GM12878 (cell line): ENCODE measurements at regions of chr1 and their contacts with region 1.

Region 1: GRCh38 chr1:56578963-56579875 is at the start of gene PLPP3:
- DNase-seq: no peak
- ATAC-seq: peak; percentile 59
- H3K4me3 ChIP-seq: peak within 1 kb of the TSS; percentile 72
- H3K27ac ChIP-seq: no peak within 1 kb of the TSS
- H3K4me1 ChIP-seq: no peaks in the 10 kb centered on the region
- H3K27me3 ChIP-seq: peaks cover 0 to 11% of the 10 kb centered on the region in 2 experiments; a peak in 2 of 4 replicates
- CTCF ChIP-seq: peak in 2 of 3 experiments; percentile 27 to 32; a peak in 4 of 6 replicates
- EP300 ChIP-seq: no peak
- POLR2A ChIP-seq: no peak
- RAD21 ChIP-seq: peak; percentile 53
- polyA plus RNA-seq, gene PLPP3: 7.4 to 8.0 TPM

Region 2: GRCh38 chr1:55860798-55861519 is 718.3 kb before region 1 on chr1:
- CTCF ChIA-PET with region 1: interaction called, 67 read pairs
- POLR2A ChIA-PET with region 1: no interaction called
- RAD21 ChIA-PET with region 1: interaction called, 61 read pairs
- SMC1A ChIA-PET with region 1: interaction called, 57 read pairs
- in situ Hi-C with region 1: loop called (anchors 10 kb)
- intact Hi-C with region 1: loop called (anchors 2 kb)
- DNase-seq: no peak
- ATAC-seq: peak; percentile 79
- H3K4me3 ChIP-seq: no peak overlapping the region
- H3K27ac ChIP-seq: no peak overlapping the region
- H3K4me1 ChIP-seq: no peaks in the 10 kb centered on the region
- H3K27me3 ChIP-seq: no peaks in the 10 kb centered on the region; a peak in 1 of 4 replicates
- CTCF ChIP-seq: peak in 2 of 3 experiments; percentile 26 to 38; a peak in 3 of 6 replicates
- EP300 ChIP-seq: no peak
- POLR2A ChIP-seq: no peak
- RAD21 ChIP-seq: peak; percentile 44

Region 3: GRCh38 chr1:56278061-56278460 is 301.2 kb before region 1 on chr1:
- CTCF ChIA-PET with region 1: interaction called, 17 read pairs
- POLR2A ChIA-PET with region 1: no interaction called
- RAD21 ChIA-PET with region 1: interaction called, 7 read pairs
- SMC1A ChIA-PET with region 1: interaction called, 10 read pairs
- in situ Hi-C with region 1: no loop called
- intact Hi-C with region 1: no loop called
- DNase-seq: no peak
- ATAC-seq: peak; percentile 62
- H3K4me3 ChIP-seq: no peak overlapping the region
- H3K27ac ChIP-seq: no peak overlapping the region
- H3K4me1 ChIP-seq: no peaks in the 10 kb centered on the region
- H3K27me3 ChIP-seq: no peaks in the 10 kb centered on the region
- CTCF ChIP-seq: no peak
- EP300 ChIP-seq: peak in 1 of 2 experiments; percentile 62; a peak in 1 of 4 replicates
- POLR2A ChIP-seq: no peak
- RAD21 ChIP-seq: no peak

Region 4: DNA sequence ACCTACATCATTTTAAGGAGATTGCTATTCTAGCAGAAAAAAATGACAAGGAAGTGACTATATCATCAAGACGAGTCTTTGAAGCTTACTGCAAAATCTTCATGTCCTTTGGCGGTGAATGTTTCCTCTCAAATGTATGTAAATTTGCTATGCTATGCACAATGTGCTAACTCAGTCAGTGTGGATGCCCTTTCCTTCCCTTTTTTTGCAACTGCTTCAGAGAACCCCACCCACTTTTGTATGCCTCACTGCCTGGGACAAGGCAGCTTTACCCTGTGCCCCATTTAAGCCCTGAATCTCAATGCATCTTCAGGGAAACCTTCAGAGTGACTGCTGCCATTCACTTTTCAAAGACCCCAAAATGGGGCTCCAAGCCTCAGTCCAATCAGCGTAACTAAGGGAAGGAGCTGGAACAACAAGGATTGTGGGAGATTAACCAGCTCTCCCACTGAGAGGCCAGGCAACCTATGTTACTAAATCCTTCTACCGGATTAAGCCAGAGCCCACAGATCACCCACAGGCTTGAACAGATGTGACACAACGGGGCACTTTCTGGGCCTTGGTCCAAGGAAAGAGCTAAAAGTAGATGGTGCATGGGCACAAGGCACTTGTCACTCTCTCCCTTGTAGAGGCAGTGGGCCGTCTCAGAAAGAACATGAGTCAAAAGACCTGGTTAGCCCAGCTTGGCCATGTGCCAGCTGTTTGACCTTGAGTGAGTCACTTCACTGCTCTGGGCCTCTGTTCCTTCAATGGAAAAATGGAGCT is 154.3 kb before region 1 on chr1:
- CTCF ChIA-PET with region 1: interaction called, 4 read pairs
- POLR2A ChIA-PET with region 1: interaction called, 4 read pairs
- RAD21 ChIA-PET with region 1: interaction called, 4 read pairs
- SMC1A ChIA-PET with region 1: interaction called, 10 read pairs
- in situ Hi-C with region 1: no loop called
- intact Hi-C with region 1: no loop called
- DNase-seq: no peak
- ATAC-seq: peak; percentile 68
- H3K4me3 ChIP-seq: no peak overlapping the region
- H3K27ac ChIP-seq: no peak overlapping the region
- H3K4me1 ChIP-seq: no peaks in the 10 kb centered on the region
- H3K27me3 ChIP-seq: no peaks in the 10 kb centered on the region; a peak in 2 of 4 replicates
- CTCF ChIP-seq: no peak
- EP300 ChIP-seq: no peak
- POLR2A ChIP-seq: no peak
- RAD21 ChIP-seq: no peak

Region 5: GRCh38 chr1:56525489-56526041 is 53.7 kb before region 1 on chr1:
- CTCF ChIA-PET with region 1: interaction called, 116 read pairs
- POLR2A ChIA-PET with region 1: interaction called, 10 read pairs
- RAD21 ChIA-PET with region 1: interaction called, 174 read pairs
- SMC1A ChIA-PET with region 1: interaction called, 80 read pairs
- in situ Hi-C with region 1: no loop called
- intact Hi-C with region 1: loop called (anchors 1 kb)
- DNase-seq: peak; percentile 79
- ATAC-seq: peak; percentile 90
- H3K4me3 ChIP-seq: no peak overlapping the region
- H3K27ac ChIP-seq: peak overlapping the region; percentile 53; the same call in 1 of the 2 replicates
- H3K4me1 ChIP-seq: peaks cover 42% of the 10 kb centered on the region
- H3K27me3 ChIP-seq: no peaks in the 10 kb centered on the region
- CTCF ChIP-seq: no peak
- EP300 ChIP-seq: peak; percentile 79 to 92
- POLR2A ChIP-seq: no peak
- RAD21 ChIP-seq: no peak